Ascending aorta (tissue), 2 donors: ENCODE measurements at regions of chr18 and their contacts with region 1.

Region 1: DNA sequence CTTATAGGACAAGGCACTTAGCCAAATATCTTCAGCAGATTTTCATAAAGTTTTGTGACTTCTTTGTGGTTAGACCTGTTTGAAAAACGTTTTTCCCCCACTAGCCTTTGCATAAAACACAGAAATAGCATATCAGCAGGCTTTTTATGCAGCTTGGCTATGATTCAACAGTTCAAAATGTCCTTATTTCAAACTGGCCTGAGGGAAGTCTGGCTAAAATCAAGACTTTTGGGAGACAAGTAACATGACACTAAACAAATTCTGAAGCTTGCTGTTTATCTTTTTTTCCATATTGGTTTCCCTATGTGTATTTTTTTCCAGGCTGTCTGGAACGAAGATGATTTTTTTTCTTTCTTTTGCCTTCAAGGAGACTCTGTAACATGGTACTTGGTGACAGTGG is 95.1 kb upstream of the L3MBTL4 start:
- DNase-seq: no peak
- H3K4me3 ChIP-seq: no peak overlapping the region
- H3K27ac ChIP-seq: no peak overlapping the region
- H3K4me1 ChIP-seq: no peaks in the 10 kb centered on the region
- H3K27me3 ChIP-seq: no peaks in the 10 kb centered on the region
- CTCF ChIP-seq: no peak

Region 2: DNA sequence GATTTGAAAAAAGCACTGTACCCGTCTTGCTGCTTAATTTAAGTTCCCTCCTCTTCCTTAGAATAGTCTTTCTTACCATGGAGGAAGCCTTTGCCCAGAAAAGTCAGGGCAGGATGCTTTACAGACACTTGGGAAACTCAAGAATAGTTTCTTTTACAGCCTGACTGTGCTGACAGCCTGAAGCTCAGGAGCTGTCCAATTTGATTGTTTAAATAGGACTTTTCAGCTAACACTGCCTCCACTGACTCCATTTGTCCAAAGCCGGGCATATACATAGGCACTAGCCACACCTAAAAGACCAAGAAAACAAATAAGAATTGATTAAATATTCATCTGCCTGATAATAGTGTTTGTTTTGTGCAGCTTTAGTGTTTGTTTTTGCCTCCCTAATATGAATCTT is 15.8 kb after region 1 on chr18:
- intact Hi-C with region 1: loop called (anchors 1 kb)
- DNase-seq: no peak
- H3K4me3 ChIP-seq: no peak overlapping the region
- H3K27ac ChIP-seq: no peak overlapping the region
- H3K4me1 ChIP-seq: no peaks in the 10 kb centered on the region
- H3K27me3 ChIP-seq: no peaks in the 10 kb centered on the region
- CTCF ChIP-seq: no peak